IMR-90 (cell line): ENCODE measurements at regions of chrX and their contacts with region 1.

Region 1: DNA sequence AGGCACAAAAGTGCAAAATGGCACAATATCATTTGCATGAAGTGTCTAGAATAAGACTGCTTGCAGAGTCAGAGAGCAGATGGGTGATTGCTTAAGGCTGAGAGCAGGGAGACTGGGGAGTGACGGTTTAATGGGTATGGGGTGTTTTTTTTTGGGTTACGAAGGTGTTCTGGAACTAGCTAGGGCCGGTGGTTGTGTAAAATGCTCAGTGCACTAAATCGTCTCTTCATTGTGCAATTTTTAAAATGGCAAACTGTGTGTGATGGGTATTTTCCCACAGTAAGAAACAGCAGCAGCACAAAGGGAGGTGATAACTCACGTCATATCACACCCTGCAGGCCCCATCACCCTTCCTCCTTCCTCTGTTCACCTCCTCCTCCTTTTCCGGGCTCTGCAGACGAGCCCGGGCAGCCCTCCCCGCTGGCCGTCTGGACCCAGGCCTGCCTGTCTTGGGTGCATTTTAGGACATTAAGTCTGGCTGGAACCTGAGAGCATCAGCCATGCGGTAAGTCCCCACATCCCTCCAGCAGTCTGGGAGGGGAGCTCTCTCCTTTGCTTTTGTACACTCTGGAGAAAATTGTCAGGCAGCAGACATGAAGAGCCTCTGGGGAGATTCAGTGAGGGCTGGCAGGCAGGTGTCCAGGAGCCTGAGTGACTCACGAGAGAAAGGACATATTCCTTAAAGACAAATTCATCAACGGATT is 42.7 kb downstream of the ASMT start:
- DNase-seq: no peak
- ATAC-seq: peak; percentile 53
- H3K4me3 ChIP-seq: no peak overlapping the region
- H3K27ac ChIP-seq: no peak overlapping the region
- H3K4me1 ChIP-seq: no peaks in the 10 kb centered on the region
- H3K27me3 ChIP-seq: no peaks in the 10 kb centered on the region
- CTCF ChIP-seq: no peak
- POLR2A ChIP-seq: no peak
- RAD21 ChIP-seq: no peak

Region 2: GRCh38 chrX:1124531-1124930 is 533.0 kb before region 1 on chrX:
- CTCF ChIA-PET with region 1: no interaction called
- POLR2A ChIA-PET with region 1: no interaction called
- dilution Hi-C with region 1: no loop called
- in situ Hi-C with region 1: no loop called
- intact Hi-C with region 1: no loop called
- DNase-seq: no peak
- ATAC-seq: no peak
- H3K4me3 ChIP-seq: no peak overlapping the region
- H3K27ac ChIP-seq: no peak overlapping the region
- H3K4me1 ChIP-seq: no peaks in the 10 kb centered on the region
- H3K27me3 ChIP-seq: no peaks in the 10 kb centered on the region
- CTCF ChIP-seq: no peak
- POLR2A ChIP-seq: no peak
- RAD21 ChIP-seq: no peak

Region 3: GRCh38 chrX:1841746-1842145 is 184.2 kb after region 1 on chrX:
- CTCF ChIA-PET with region 1: no interaction called
- POLR2A ChIA-PET with region 1: no interaction called
- dilution Hi-C with region 1: no loop called
- in situ Hi-C with region 1: no loop called
- intact Hi-C with region 1: no loop called
- DNase-seq: no peak
- ATAC-seq: no peak
- H3K4me3 ChIP-seq: no peak overlapping the region
- H3K27ac ChIP-seq: no peak overlapping the region
- H3K4me1 ChIP-seq: no peaks in the 10 kb centered on the region
- H3K27me3 ChIP-seq: no peaks in the 10 kb centered on the region
- CTCF ChIP-seq: no peak
- POLR2A ChIP-seq: no peak
- RAD21 ChIP-seq: no peak

Region 4: DNA sequence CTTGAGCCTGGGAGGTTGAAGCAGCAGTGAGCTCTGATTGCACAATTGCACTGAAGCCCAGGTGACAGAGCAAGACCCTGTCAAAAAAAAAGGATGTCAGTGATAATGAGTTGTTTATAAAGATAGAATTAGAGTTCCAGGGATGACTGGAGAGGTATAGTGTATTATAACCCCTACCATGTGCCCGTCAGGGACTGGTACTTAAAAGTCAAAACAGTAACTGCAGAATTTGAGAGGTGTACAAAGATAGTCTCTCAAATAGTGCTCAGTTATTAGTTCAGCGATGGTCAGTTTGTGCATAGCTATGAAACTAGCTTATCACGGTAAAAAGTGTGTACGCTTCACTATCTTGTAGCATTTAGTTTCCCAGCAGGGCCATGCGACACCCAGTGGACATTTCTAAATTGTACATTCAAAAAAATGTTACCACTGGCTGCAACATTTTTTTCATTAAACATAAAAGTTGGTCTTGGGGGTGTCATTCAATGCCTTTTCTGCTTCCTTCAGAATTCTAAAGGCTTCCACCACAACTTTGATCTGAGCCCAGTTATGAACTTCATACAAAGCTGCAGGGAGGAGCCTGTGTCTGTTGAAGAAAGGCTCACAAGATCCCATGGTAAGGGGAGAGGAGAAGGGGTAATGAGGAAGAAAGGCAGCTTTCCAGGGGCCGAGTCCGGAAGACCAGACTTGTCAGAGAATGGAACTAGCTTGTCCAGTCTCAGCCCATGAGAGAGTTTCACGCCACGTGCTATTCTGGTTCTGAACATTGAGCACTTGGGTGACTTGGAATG is 1162.0 kb after region 1 on chrX:
- CTCF ChIA-PET with region 1: no interaction called
- POLR2A ChIA-PET with region 1: no interaction called
- dilution Hi-C with region 1: no loop called
- in situ Hi-C with region 1: no loop called
- intact Hi-C with region 1: loop called (anchors 1 kb)
- DNase-seq: peak; percentile 39
- ATAC-seq: peak; percentile 78
- H3K4me3 ChIP-seq: no peak overlapping the region
- H3K27ac ChIP-seq: no peak overlapping the region
- H3K4me1 ChIP-seq: no peaks in the 10 kb centered on the region
- H3K27me3 ChIP-seq: peaks cover 4% of the 10 kb centered on the region; the same call in 1 of the 2 replicates
- CTCF ChIP-seq: peak; percentile 62
- POLR2A ChIP-seq: no peak
- RAD21 ChIP-seq: peak; percentile 70